WTC11 (cell line): ENCODE measurements at regions of chr18 and their contacts with region 1.

Region 1: DNA sequence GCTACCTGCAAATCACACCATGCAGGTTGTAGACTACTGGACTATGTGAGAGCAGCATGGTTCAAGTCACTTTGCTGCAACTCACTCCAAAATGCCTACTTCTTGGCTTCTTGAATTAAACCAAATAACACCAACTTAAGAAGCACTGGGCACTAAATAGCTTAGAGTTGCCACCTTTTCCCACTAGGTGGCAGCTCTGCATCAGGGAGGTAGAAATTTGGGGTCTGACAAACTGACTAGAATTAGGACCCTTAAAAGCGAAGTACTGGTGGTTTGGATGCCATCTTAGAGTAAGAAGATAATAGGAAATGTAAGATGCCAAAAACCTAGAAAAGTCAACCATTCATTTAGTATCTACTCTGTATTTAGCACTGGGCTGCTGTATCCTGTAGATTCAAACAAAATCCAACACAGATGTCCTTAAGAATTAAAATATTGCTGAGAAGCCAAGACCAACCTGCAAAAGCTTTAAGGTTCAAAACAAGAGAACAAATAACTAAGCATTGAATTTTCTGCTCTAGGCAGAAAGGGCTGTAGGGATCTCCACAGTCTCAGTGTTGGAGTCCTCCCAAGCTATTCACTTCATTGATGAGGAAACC is 65.5 kb downstream of the CCBE1 start:
- DNase-seq: peak; percentile 51
- ATAC-seq: peak; percentile 78
- H3K4me3 Mint-ChIP-seq: no peak overlapping the region
- H3K27ac Mint-ChIP-seq: no peak overlapping the region
- H3K4me1 Mint-ChIP-seq: peaks cover 23% of the 10 kb centered on the region
- H3K27me3 Mint-ChIP-seq: no peaks in the 10 kb centered on the region
- CTCF ChIP-seq: peak; percentile 59

Region 2: GRCh38 chr18:59459369-59460079 is 172.2 kb before region 1 on chr18:
- CTCF ChIA-PET with region 1: interaction called, 20 read pairs
- POLR2A ChIA-PET with region 1: no interaction called
- DNase-seq: no peak
- ATAC-seq: peak; percentile 46; the same call in 1 of the 2 replicates
- H3K4me3 Mint-ChIP-seq: no peak overlapping the region
- H3K27ac Mint-ChIP-seq: no peak overlapping the region
- H3K4me1 Mint-ChIP-seq: peaks cover 22% of the 10 kb centered on the region
- H3K27me3 Mint-ChIP-seq: no peaks in the 10 kb centered on the region
- CTCF ChIP-seq: peak; percentile 62

Region 3: GRCh38 chr18:59646228-59646962 is 14.7 kb after region 1 on chr18:
- CTCF ChIA-PET with region 1: interaction called, 11 read pairs
- POLR2A ChIA-PET with region 1: no interaction called
- DNase-seq: peak; percentile 37
- ATAC-seq: peak; percentile 89
- H3K4me3 Mint-ChIP-seq: no peak overlapping the region
- H3K27ac Mint-ChIP-seq: no peak overlapping the region
- H3K4me1 Mint-ChIP-seq: peaks cover 33% of the 10 kb centered on the region
- H3K27me3 Mint-ChIP-seq: no peaks in the 10 kb centered on the region
- CTCF ChIP-seq: 0 out of 2 replicates have a peak, but pooled peaks have one; percentile 17

Region 4: DNA sequence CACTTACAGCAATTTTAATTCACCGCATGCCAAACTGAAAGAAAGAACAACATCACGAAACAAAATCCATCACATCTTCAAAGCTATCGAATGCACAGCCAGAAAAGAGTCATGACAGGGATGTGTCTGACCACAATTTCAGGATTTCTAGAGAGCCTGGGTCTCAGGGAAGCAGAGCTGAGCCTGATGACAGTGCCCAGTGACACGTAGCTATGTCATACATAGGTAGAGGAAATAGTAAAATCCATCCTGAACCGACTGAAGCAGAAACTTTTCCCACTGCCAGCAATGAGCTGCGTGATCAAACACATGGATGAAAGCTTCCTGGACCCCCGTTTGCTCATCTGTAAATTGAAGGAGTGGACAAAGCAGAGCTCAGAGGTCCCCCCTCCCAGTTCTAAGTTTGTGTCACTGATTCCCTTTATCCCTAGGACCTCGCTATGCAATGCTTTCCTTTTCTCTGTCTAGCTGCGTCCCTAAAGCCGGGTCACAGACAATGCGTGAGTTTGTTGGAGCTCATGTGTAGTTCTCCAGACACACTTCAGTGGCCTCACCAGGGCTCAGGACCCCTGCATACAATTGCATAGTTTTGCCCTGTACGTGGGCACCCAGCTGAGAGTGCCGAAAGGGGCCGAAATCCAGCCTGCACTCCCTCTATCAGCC is 28.0 kb after region 1 on chr18:
- CTCF ChIA-PET with region 1: interaction called, 12 read pairs
- POLR2A ChIA-PET with region 1: no interaction called
- DNase-seq: no peak
- ATAC-seq: peak; percentile 48
- H3K4me3 Mint-ChIP-seq: no peak overlapping the region
- H3K27ac Mint-ChIP-seq: no peak overlapping the region
- H3K4me1 Mint-ChIP-seq: peaks cover 6% of the 10 kb centered on the region; the same call in 1 of the 2 replicates
- H3K27me3 Mint-ChIP-seq: no peaks in the 10 kb centered on the region
- CTCF ChIP-seq: no peak

Region 5: DNA sequence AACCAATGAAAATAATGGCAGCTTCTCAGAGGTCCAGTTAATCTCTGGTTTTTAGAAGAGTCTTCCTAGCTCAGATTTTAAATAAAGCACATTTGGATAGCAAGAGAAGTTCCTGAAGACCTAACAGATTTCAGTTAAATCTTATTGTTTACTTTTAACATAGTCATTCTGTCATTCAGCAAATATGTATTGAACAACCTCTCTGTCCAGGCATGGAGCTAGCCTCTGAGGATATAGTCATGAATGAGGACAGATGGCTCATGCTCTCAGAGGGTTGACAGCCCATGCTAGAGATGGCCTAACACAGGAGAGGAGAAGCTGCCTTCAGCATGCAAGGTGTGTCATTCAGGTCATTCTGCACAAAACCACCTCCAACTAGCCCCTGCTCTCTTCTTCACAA is 59.3 kb after region 1 on chr18:
- CTCF ChIA-PET with region 1: interaction called, 94 read pairs
- POLR2A ChIA-PET with region 1: no interaction called
- DNase-seq: no peak
- ATAC-seq: no peak
- H3K4me3 Mint-ChIP-seq: no peak overlapping the region
- H3K27ac Mint-ChIP-seq: no peak overlapping the region
- H3K4me1 Mint-ChIP-seq: peaks cover 84% of the 10 kb centered on the region
- H3K27me3 Mint-ChIP-seq: peaks cover 44% of the 10 kb centered on the region
- CTCF ChIP-seq: no peak